ENCODE measurements at regions of chr5 and their contacts with region 1.

Region 1: DNA sequence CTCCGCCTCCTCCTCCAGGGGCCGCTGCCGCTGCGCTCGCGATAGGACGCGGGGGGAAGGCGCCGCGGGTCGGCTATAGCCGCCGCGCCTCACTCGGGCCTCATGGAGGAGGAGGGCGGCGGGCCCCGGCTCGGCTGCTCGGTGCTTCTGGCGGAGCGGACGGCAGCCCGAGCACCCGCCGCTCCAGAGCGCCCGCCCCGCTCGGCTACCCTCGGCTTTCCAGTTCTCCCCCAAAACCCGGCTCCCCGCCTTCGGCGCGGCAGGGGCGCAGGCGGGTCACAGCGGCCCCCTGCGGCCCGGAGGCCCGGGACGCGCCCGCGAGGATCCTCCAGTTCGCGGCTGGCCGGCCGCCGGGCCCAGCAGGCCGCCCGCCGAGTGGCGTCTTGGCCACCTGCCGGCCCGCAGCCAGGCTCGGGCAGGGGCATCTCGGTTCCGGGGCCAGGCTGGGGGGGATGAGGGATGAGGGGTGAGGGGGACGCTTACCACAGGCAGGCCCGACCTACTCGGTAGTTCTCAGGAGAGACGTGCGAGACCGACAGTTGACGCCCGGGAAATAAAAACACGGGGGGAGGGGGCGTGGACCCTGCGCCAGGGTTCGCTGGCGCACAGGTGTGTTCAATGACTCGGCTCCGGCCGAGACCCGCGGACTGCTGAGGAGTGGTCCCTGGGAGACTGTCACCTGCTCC is at the start of gene PAIP1:
- DNase-seq: no peak
- ATAC-seq: peak; percentile 92
- H3K4me3 ChIP-seq: peak within 1 kb of the TSS; percentile 83 to 99
- H3K27ac ChIP-seq: peak within 1 kb of the TSS; percentile 95
- H3K4me1 ChIP-seq: peaks cover 18% of the 10 kb centered on the region
- H3K27me3 ChIP-seq: no peaks in the 10 kb centered on the region
- CTCF ChIP-seq: peak; percentile 96
- total RNA-seq, gene PAIP1: 127 TPM

Region 2: GRCh38 chr5:43602461-43603343 is 45.7 kb after region 1 on chr5 and contains the start of gene NNT:
- CTCF ChIA-PET with region 1: no interaction called
- POLR2A ChIA-PET with region 1: no interaction called
- in situ Hi-C with region 1: no loop called
- intact Hi-C with region 1: loop called (anchors 5 kb)
- DNase-seq: no peak
- ATAC-seq: peak; percentile 85
- H3K4me3 ChIP-seq: peak within 1 kb of the TSS; percentile 82 to 97
- H3K27ac ChIP-seq: peak within 1 kb of the TSS; percentile 97
- H3K4me1 ChIP-seq: peaks cover 14% of the 10 kb centered on the region
- H3K27me3 ChIP-seq: no peaks in the 10 kb centered on the region
- CTCF ChIP-seq: no peak
- total RNA-seq, gene NNT: 78.7 TPM

Region 3: GRCh38 chr5:44536650-44537260 is 979.8 kb after region 1 on chr5:
- CTCF ChIA-PET with region 1: no interaction called
- POLR2A ChIA-PET with region 1: interaction called, 15 read pairs
- in situ Hi-C with region 1: no loop called
- intact Hi-C with region 1: no loop called
- DNase-seq: peak; percentile 18
- ATAC-seq: no peak
- H3K4me3 ChIP-seq: no peak overlapping the region
- H3K27ac ChIP-seq: no peak overlapping the region
- H3K4me1 ChIP-seq: no peaks in the 10 kb centered on the region
- H3K27me3 ChIP-seq: no peaks in the 10 kb centered on the region
- CTCF ChIP-seq: peak; percentile 74